Activated CD4-positive, alpha-beta memory T cell treated with anti-CD3 and anti-CD28 coated beads for 36 hours (primary cell): ENCODE measurements at regions of chr17 and their contacts with region 1.

Region 1: DNA sequence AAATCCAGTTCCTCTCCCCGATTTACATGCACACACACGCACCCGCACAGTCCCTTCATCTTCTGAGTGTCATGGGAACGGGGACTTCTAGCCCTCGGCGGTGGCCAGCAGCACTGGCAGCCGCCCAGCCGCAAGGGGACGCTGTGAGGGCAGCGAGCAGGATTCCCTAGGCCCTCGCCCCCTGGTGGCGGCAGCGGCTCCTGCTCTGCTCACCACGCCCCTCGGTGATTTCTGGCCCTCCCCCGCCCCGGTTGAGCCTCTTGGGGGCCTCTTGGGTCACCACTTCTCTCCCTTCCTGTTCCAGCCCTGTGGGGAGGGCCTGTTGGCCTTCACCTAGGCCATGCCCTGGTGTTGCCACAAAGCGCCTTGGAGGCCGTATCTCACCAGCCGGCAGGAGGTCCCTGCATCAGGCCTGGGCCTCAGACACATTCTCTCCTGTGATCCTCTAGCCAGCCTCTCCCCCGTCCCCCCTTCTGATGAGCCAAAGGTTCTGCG is 75.2 kb upstream of the KSR1 start:
- DNase-seq: peak; percentile 90
- H3K4me3 Mint-ChIP-seq: no peak overlapping the region
- H3K27ac Mint-ChIP-seq: no peak overlapping the region
- H3K4me1 Mint-ChIP-seq: peaks cover 3% of the 10 kb centered on the region
- H3K27me3 Mint-ChIP-seq: peaks cover 11% of the 10 kb centered on the region

Region 2: DNA sequence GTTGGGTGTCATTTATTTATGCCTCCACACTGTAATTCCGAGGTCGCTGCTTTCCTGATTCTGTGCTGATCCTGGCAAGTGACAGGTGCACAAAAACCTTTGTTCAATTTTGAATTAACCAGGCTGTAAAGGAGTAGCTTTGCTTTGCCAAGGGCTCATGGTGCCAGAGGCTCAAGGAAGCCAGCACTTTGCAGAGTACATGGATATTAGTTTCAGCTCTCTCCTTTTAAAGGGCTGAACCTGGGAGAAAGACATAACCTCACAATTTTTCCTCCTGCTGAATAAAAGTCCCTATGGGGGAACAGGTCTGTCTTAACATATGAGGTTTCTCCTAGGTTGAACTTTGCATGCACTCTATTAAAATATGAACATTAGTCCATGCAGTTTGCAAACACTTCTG is 314.7 kb before region 1 on chr17:
- CTCF ChIA-PET with region 1: no interaction called
- POLR2A ChIA-PET with region 1: no interaction called
- intact Hi-C with region 1: no loop called
- DNase-seq: no peak
- H3K4me3 Mint-ChIP-seq: no peak overlapping the region
- H3K27ac Mint-ChIP-seq: no peak overlapping the region
- H3K4me1 Mint-ChIP-seq: no peaks in the 10 kb centered on the region
- H3K27me3 Mint-ChIP-seq: peaks cover 3% of the 10 kb centered on the region

Region 3: DNA sequence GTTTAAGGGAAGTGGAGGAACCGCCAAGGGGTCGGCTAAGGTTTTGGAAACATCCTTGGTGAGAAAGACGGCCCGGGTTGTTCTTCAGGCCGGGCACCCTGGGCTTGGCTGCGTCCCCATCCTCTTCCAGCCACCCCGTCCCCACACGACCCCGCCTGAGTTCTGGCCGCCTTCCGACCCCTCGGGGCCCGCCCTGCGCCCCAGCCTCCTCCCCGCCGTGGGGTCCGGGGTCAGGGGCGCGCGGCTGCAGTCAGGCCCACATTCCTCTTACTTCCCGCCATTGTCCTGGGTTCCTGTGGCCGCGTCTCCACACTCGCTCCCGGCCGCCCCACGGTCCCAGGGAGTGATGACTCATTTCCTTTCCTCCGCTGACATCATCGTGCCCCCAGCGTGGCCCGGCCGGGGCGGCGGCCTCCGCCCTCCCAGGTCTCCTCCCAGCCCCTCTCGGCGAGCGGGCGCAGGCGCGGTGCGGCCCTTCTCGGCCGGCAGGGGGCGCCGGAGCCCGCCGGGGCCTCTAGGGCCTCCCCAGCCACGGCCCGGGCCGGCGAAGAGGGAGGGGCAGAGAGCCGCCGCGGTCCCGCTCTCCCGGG is 27.5 kb before region 1 on chr17:
- CTCF ChIA-PET with region 1: interaction called, 14 read pairs
- POLR2A ChIA-PET with region 1: no interaction called
- intact Hi-C with region 1: loop called (anchors 1 kb)
- DNase-seq: peak; percentile 93
- H3K4me3 Mint-ChIP-seq: peak overlapping the region; percentile 78
- H3K27ac Mint-ChIP-seq: peak overlapping the region; percentile 86
- H3K4me1 Mint-ChIP-seq: peaks cover 22% of the 10 kb centered on the region
- H3K27me3 Mint-ChIP-seq: no peaks in the 10 kb centered on the region

Region 4: DNA sequence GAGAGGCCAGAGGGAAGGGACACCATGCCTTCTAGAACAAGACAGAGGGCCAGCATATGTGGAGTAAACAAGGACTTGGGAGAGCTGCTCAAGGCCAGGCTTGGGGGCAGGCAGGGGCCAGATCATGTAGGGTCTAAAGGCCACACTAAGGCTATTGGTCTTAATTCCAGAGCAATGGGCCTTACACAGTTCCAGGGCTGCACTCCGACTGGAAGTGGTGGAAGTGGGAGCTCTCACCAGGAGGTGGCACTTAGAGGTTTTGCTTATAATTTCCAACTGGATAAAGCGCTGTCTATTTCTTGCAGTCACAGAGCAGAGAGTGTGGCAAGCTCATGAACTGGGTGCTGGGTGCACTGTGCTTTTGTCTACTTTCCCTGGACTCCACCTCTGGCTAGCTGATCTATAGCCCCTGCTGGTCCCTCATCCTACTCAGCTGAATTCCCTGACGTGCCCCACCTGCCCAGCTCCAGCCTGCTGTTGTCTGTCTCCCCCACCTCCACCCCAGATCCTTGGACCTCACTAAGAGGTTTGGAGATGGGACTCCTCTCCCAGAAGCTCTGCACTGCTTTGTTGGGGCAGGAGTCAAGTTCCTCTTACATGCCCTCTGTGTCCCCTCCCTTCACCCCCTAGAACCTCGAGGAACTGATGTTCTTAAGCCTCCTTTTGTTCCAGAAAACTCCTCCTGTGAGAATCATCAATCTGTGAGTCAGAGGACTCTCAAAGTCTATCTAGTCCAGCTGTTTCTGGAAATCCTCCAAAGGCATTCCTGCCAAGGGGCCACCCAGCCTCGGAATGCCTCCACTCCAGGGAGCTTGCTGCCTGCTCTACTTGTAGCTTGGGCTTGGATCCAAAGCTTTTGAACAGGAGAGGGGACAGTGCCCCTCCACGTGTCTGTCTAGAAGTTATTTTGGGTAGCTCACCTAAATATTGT is 27.1 kb after region 1 on chr17:
- CTCF ChIA-PET with region 1: interaction called, 20 read pairs
- POLR2A ChIA-PET with region 1: no interaction called
- intact Hi-C with region 1: no loop called
- DNase-seq: no peak
- H3K4me3 Mint-ChIP-seq: no peak overlapping the region
- H3K27ac Mint-ChIP-seq: no peak overlapping the region
- H3K4me1 Mint-ChIP-seq: no peaks in the 10 kb centered on the region
- H3K27me3 Mint-ChIP-seq: no peaks in the 10 kb centered on the region